K562 (cell line): ENCODE measurements at regions of chr10 and their contacts with region 1.

Region 1: DNA sequence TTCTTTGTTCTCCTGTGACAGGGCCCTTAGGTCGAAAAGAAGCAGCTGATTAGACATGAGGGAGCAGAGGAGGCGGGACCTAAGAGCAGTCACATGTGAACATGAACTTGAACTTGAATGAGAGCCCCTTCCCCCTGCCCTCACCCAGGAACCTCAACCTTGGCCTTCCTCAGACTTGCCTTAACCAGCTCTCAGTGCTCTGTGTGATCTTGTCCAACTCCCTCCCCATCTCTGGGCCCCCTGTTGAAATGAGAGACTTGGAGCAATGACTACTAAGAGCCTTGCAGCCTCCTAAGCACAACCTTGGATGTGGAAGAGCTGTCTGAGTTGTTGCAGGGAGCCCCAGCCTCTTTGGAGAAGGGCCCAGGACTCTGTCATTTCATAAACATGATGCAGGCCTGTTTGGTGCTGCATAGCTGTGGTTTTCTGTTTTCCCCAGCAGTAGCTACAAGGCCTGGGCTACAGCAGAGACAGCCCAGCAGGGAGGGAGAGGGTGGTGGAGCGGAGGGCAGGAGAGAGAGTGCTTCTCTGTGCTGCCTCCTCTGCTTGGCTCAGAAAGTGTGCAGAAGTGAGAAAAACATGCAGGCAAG is 123.9 kb upstream of the ZMIZ1 start:
- DNase-seq: no peak
- ATAC-seq: no peak
- H3K4me3 ChIP-seq: no peak overlapping the region
- H3K27ac ChIP-seq: no peak overlapping the region
- H3K4me1 ChIP-seq: no peaks in the 10 kb centered on the region
- H3K27me3 ChIP-seq: peaks cover 3 to 60% of the 10 kb centered on the region in 2 experiments; a peak in 4 of 5 replicates
- CTCF ChIP-seq: no peak
- EP300 ChIP-seq: no peak
- POLR2A ChIP-seq: no peak
- RAD21 ChIP-seq: no peak

Region 2: GRCh38 chr10:78964952-78965633 is 20.3 kb after region 1 on chr10:
- CTCF ChIA-PET with region 1: no interaction called
- POLR2A ChIA-PET with region 1: interaction called, 14 read pairs
- in situ Hi-C with region 1: no loop called
- intact Hi-C with region 1: no loop called
- DNase-seq: peak; percentile 55 to 67 (median 60)
- ATAC-seq: peak; percentile 73
- H3K4me3 ChIP-seq: no peak overlapping the region
- H3K27ac ChIP-seq: no peak overlapping the region
- H3K4me1 ChIP-seq: peaks cover 13 to 18% of the 10 kb centered on the region in 2 experiments; a peak in 3 of 5 replicates
- H3K27me3 ChIP-seq: peaks cover 34 to 49% of the 10 kb centered on the region in 2 experiments
- CTCF ChIP-seq: no peak
- EP300 ChIP-seq: no peak
- POLR2A ChIP-seq: no peak
- RAD21 ChIP-seq: no peak